ENCODE measurements at regions of chr1 and their contacts with region 1.

Region 1: GRCh38 chr1:213987927-213988506 is at the start of gene PROX1:
- DNase-seq: no peak
- ATAC-seq: peak; percentile 69
- H3K4me3 ChIP-seq: peak within 1 kb of the TSS; percentile 82 to 94 (median 84)
- H3K27ac ChIP-seq: peak within 1 kb of the TSS; percentile 72
- H3K4me1 ChIP-seq: peaks cover 59% of the 10 kb centered on the region
- H3K27me3 ChIP-seq: no peaks in the 10 kb centered on the region; a peak in 1 of 5 replicates
- CTCF ChIP-seq: no peak
- EP300 ChIP-seq: no peak
- POLR2A ChIP-seq: peak; percentile 77 to 79
- RAD21 ChIP-seq: 0 out of 2 replicates have a peak, but pooled peaks have one; percentile 23
- total RNA-seq, gene PROX1: 30.2 and 48.5 TPM in 2 replicates

Region 2: GRCh38 chr1:213572912-213573647 is 414.9 kb before region 1 on chr1:
- CTCF ChIA-PET with region 1: no interaction called
- POLR2A ChIA-PET with region 1: interaction called, 15 read pairs
- in situ Hi-C with region 1: loop called (anchors 10 kb)
- intact Hi-C with region 1: loop called (anchors 2 kb)
- DNase-seq: peak; percentile 97
- ATAC-seq: peak; percentile 80
- H3K4me3 ChIP-seq: no peak overlapping the region; a peak in 1 of 6 replicates
- H3K27ac ChIP-seq: peak overlapping the region; percentile 90
- H3K4me1 ChIP-seq: peaks cover 69% of the 10 kb centered on the region
- H3K27me3 ChIP-seq: no peaks in the 10 kb centered on the region
- CTCF ChIP-seq: no peak
- EP300 ChIP-seq: peak; percentile 72 to 99; a peak in 3 of 4 replicates
- POLR2A ChIP-seq: no peak
- RAD21 ChIP-seq: 0 out of 2 replicates have a peak, but pooled peaks have one; percentile 14

Region 3: DNA sequence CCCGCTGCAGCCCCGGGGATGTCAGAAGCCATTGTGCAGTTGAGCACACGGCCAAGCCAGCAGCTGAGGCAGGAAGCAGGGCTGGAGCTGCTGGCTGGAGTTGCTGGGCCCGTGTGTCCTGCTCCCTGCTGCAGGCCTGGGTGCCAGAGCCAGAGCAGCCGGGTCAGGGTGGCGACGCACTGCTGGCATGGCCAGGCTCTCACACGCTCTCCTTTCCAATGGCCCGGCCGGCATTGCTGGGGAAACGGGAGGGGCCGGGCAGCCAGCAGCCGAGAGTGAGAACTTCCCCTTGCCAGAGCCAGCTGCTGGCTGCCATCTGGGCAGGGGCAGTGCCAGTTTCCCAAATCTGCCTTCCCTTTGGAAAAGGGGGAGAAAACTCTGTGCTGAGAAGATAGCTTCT is 82.7 kb before region 1 on chr1:
- CTCF ChIA-PET with region 1: no interaction called
- POLR2A ChIA-PET with region 1: no interaction called
- in situ Hi-C with region 1: no loop called
- intact Hi-C with region 1: no loop called
- DNase-seq: no peak
- ATAC-seq: no peak
- H3K4me3 ChIP-seq: no peak overlapping the region
- H3K27ac ChIP-seq: no peak overlapping the region
- H3K4me1 ChIP-seq: peaks cover 8% of the 10 kb centered on the region; the same call in 1 of the 2 replicates
- H3K27me3 ChIP-seq: no peaks in the 10 kb centered on the region
- CTCF ChIP-seq: no peak
- EP300 ChIP-seq: no peak
- POLR2A ChIP-seq: no peak
- RAD21 ChIP-seq: no peak

Region 4: GRCh38 chr1:213958346-213958745 is 29.7 kb before region 1 on chr1:
- CTCF ChIA-PET with region 1: no interaction called
- POLR2A ChIA-PET with region 1: interaction called, 10 read pairs
- in situ Hi-C with region 1: no loop called
- intact Hi-C with region 1: no loop called
- DNase-seq: peak; percentile 73
- ATAC-seq: peak; percentile 70
- H3K4me3 ChIP-seq: no peak overlapping the region
- H3K27ac ChIP-seq: peak overlapping the region; percentile 66
- H3K4me1 ChIP-seq: peaks cover 84% of the 10 kb centered on the region
- H3K27me3 ChIP-seq: no peaks in the 10 kb centered on the region
- CTCF ChIP-seq: no peak
- EP300 ChIP-seq: peak in 1 of 2 experiments; percentile 93; a peak in 2 of 4 replicates
- POLR2A ChIP-seq: no peak
- RAD21 ChIP-seq: no peak

Region 5: DNA sequence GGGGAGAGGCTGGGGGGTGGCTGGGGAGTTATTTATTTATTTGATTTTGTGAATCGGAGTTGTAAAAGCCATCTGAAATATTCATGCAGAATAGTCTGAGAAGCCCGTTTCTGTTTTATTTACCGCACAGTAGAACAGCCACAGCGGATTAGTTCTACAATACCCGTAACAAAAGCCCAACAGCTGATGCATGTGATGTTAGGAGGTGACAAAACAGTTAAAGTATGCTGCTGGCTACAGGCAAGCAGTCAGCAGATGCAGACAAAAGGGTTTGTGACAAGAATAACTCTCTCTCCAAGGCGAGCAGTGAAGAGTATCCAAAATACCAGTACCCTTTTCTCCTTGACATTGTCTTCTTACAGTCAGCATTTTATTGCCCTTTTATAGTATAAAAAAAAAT is 41.8 kb after region 1 on chr1:
- CTCF ChIA-PET with region 1: no interaction called
- POLR2A ChIA-PET with region 1: interaction called, 48 read pairs
- in situ Hi-C with region 1: no loop called
- intact Hi-C with region 1: loop called (anchors 1 kb)
- DNase-seq: no peak
- ATAC-seq: no peak
- H3K4me3 ChIP-seq: no peak overlapping the region
- H3K27ac ChIP-seq: peak overlapping the region; percentile 85
- H3K4me1 ChIP-seq: peaks cover 81% of the 10 kb centered on the region
- H3K27me3 ChIP-seq: no peaks in the 10 kb centered on the region
- CTCF ChIP-seq: no peak
- EP300 ChIP-seq: no peak
- POLR2A ChIP-seq: no peak
- RAD21 ChIP-seq: no peak

Region 6: GRCh38 chr1:214050513-214051401 is 62.7 kb after region 1 on chr1:
- CTCF ChIA-PET with region 1: no interaction called
- POLR2A ChIA-PET with region 1: interaction called, 107 read pairs
- in situ Hi-C with region 1: no loop called
- intact Hi-C with region 1: loop called (anchors 5 kb)
- DNase-seq: peak; percentile 99
- ATAC-seq: peak; percentile 91
- H3K4me3 ChIP-seq: peak overlapping the region in 2 of 3 experiments; percentile 4 to 32; a peak in 3 of 6 replicates
- H3K27ac ChIP-seq: peak overlapping the region; percentile 91
- H3K4me1 ChIP-seq: peaks cover 73% of the 10 kb centered on the region
- H3K27me3 ChIP-seq: no peaks in the 10 kb centered on the region
- CTCF ChIP-seq: no peak
- EP300 ChIP-seq: peak; percentile 66 to 96
- POLR2A ChIP-seq: peak in 1 of 2 experiments; percentile 44; a peak in 2 of 4 replicates
- RAD21 ChIP-seq: no peak; the same call in none of the 2 replicates